Stomach (tissue), 19 donors: ENCODE measurements at regions of chr1 and their contacts with region 1.

Region 1: DNA sequence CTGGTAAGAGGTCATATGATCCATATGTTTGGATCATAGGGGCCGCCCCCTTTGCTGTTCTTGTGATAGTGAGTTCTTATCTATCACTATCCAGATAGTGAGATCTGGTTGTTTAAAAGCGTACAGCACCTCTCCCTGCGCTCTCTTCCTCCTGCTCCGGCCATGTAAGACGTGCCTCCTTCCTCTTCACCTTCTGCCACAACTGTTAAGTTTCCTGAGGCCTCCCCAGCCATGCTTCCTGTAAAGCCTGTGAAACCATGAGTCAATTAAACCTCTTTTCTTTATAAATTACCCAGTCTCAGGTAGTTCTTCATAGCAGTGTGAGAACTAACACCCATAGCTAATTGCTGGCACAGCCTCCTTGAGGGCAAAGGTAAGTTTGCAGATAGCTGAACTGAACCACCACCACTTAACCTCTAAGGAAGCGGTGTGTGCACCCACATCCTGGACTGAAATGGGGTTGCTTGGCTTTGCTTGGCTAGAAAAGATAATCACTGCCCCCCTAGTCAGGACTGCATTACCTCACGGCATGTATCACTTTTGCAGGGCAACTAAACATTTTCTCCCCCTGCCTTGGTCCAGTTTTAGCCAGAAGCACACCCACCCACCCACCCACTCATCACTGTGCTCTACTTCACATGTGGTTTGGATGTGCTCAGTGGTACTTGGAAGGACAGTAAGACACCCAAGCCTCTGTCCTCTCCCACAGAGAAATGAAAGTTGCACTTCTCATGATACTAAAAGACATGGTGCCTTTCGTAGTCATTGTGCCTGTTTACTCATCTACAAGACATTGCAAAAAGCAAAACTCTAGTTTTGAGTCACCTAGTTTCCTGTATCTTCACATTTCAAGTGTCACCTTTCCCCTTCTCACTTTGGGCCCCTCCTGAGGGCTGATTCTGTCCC is 23.1 kb upstream of the PTAFR start:
- DNase-seq: peak; percentile 38 to 42
- H3K4me3 ChIP-seq: no peak overlapping the region
- H3K27ac ChIP-seq: peak overlapping the region in 1 of 5 donors; percentile 23
- H3K4me1 ChIP-seq: peaks cover 0 to 34% (median 10%) of the 10 kb centered on the region in 4 donors
- H3K27me3 ChIP-seq: no peaks in the 10 kb centered on the region
- CTCF ChIP-seq: no peak
- EP300 ChIP-seq: no peak
- POLR2A ChIP-seq: no peak

Region 2: DNA sequence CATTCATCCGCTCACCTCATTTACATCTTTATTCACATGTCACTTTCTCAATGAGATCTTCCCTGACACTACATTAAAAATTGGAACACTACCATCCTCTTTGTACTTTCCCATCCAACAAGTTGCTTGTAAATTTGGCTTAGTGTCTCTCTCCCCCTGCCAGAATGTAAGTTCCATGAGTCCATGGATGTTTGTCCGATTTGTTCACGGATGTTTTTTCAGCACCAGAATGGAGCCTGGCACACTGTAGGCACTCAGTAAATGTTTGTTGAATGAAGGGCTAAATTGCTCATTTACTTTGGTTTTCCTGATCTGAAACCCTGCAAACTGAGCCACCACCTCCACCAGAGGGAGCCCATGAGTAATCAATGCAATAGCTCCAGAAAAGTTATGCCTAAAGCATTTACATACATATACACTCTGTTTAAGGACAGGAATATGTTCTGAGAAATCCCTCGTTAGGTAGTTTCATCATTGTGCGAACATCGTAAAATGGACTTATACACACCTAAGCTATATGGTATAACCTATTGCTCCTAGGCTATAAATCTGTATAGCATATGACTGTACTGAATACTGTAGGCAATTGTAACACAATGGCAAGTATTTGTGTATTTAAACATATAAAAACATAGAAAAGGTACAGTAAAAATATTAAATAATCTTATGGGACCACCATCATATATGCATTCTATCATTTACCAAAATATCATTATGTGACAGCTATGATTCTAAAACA is 108.4 kb before region 1 on chr1:
- intact Hi-C with region 1: loop called (anchors 5 kb)
- DNase-seq: peak; percentile 86 to 87
- H3K4me3 ChIP-seq: no peak overlapping the region
- H3K27ac ChIP-seq: peak overlapping the region in 1 of 5 donors; percentile 33
- H3K4me1 ChIP-seq: peaks cover 19 to 34% (median 29%) of the 10 kb centered on the region in 4 donors
- H3K27me3 ChIP-seq: no peaks in the 10 kb centered on the region
- CTCF ChIP-seq: peak in 5 of 7 experiments; percentile 55 to 88 (median 74)
- EP300 ChIP-seq: no peak
- POLR2A ChIP-seq: no peak

Region 3: DNA sequence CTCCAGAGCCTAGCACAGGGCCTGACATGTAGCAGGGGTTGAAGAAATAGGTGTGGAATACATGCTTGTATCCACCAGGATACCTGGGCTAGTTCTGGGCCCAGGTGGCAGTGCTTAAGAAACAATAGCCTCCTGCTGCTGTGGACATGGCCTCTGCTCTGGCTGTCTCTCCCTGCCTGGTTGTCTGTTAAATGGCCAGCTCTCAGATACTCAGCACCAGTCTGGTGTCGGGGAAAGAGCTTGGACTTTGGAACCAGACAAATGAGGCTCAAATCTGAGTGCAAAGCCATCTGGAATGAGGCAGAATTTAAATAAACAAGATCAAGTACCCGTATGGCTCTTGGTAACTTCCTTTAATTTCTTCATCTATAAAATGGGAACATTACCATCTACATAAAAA is 91.3 kb after region 1 on chr1:
- intact Hi-C with region 1: no loop called
- DNase-seq: peak in 1 of 2 donors; percentile 64
- H3K4me3 ChIP-seq: no peak overlapping the region
- H3K27ac ChIP-seq: no peak overlapping the region
- H3K4me1 ChIP-seq: peaks cover 0 to 5% (median 0%) of the 10 kb centered on the region in 4 donors
- H3K27me3 ChIP-seq: no peaks in the 10 kb centered on the region
- CTCF ChIP-seq: no peak
- EP300 ChIP-seq: no peak
- POLR2A ChIP-seq: no peak